ENCODE measurements at regions of chr5 and their contacts with region 1.

Region 1: DNA sequence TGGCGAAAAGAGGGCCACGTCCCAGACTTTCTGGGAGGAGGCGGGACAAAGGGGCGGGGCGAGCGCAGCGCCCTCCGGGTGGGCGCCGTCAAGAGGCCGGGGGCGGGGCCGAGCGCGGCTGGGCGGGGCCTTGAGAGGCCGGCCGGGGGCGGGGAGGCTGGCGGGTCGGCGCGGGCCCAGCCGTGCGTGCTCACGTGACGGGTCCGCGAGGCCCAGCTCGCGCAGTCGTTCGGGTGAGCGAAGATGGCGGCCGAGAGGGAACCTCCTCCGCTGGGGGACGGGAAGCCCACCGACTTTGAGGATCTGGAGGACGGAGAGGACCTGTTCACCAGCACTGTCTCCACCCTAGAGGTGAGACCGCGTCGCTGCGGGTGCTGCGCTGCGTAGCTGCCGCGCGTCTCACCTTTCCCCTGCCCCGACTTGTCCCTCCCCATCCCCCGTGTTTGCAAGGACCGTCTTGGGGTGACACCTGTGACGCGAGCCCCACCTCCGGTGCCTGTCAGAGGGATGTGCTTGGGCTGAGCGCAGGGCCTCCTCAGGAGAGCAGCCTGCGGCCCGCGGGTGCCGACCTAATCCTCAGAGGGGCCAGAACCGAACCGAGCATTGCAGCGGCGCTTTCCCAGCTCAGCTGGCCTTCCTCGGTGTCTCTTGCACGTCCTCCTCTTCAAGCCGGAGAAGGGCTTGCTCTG is at the start of gene SNX2:
- DNase-seq: peak; percentile 92
- H3K4me3 Mint-ChIP-seq: peak within 1 kb of the TSS; percentile 94
- H3K27ac Mint-ChIP-seq: peak within 1 kb of the TSS; percentile 95
- H3K4me1 Mint-ChIP-seq: peaks cover 30% of the 10 kb centered on the region
- H3K27me3 Mint-ChIP-seq: no peaks in the 10 kb centered on the region
- CTCF ChIP-seq: peak; percentile 32
- total RNA-seq, gene SNX2: 94.9 and 120 TPM in 2 replicates

Region 2: GRCh38 chr5:122639864-122640263 is 135.1 kb before region 1 on chr5:
- CTCF ChIA-PET with region 1: no interaction called
- POLR2A ChIA-PET with region 1: no interaction called
- intact Hi-C with region 1: no loop called
- DNase-seq: peak; percentile 42
- H3K4me3 Mint-ChIP-seq: no peak overlapping the region
- H3K27ac Mint-ChIP-seq: no peak overlapping the region
- H3K4me1 Mint-ChIP-seq: peaks cover 7% of the 10 kb centered on the region
- H3K27me3 Mint-ChIP-seq: no peaks in the 10 kb centered on the region
- CTCF ChIP-seq: no peak

Region 3: DNA sequence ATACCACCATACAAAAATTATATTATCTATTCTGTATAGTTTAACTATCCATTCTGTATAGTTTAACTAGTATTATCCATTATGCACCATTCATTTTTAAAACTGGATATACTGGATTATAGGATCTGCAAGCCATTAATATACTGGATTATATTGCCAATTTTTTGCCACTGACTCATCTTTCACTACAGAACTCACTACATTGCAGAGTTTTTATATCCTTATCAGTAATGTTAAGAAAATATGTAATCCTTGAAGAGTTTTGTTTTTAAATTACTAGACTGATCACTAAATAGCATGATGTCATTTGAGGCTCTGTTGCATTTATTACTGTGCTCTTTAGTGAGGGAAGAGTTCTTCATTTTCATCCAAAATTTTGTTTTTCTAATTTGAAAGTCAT is 110.0 kb before region 1 on chr5:
- CTCF ChIA-PET with region 1: no interaction called
- POLR2A ChIA-PET with region 1: no interaction called
- intact Hi-C with region 1: no loop called
- DNase-seq: no peak
- H3K4me3 Mint-ChIP-seq: no peak overlapping the region
- H3K27ac Mint-ChIP-seq: no peak overlapping the region
- H3K4me1 Mint-ChIP-seq: peaks cover 10% of the 10 kb centered on the region
- H3K27me3 Mint-ChIP-seq: no peaks in the 10 kb centered on the region
- CTCF ChIP-seq: no peak

Region 4: DNA sequence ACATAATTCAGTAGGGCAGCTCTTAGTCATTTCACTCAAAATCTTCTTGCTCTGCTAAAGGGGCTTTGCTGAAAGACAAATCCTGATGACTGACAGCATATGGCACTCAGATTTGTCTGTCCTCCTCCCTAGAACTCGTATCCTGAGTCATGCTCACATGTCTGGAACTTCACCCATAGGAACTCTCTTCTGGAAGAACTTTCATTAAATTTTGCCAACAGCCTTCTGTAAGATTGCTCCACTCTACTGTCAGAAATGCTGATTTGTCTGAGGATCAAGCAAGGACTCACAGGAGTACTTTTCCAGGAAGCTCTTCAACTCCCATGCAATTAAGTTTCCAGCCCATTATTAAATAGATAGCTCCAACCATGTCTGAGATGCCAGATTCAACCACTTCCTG is 59.9 kb before region 1 on chr5:
- CTCF ChIA-PET with region 1: no interaction called
- POLR2A ChIA-PET with region 1: interaction called, 4 read pairs
- intact Hi-C with region 1: loop called (anchors 5 kb)
- DNase-seq: peak; percentile 25
- H3K4me3 Mint-ChIP-seq: no peak overlapping the region
- H3K27ac Mint-ChIP-seq: peak overlapping the region; percentile 13
- H3K4me1 Mint-ChIP-seq: peaks cover 10% of the 10 kb centered on the region
- H3K27me3 Mint-ChIP-seq: no peaks in the 10 kb centered on the region
- CTCF ChIP-seq: no peak

Region 5: DNA sequence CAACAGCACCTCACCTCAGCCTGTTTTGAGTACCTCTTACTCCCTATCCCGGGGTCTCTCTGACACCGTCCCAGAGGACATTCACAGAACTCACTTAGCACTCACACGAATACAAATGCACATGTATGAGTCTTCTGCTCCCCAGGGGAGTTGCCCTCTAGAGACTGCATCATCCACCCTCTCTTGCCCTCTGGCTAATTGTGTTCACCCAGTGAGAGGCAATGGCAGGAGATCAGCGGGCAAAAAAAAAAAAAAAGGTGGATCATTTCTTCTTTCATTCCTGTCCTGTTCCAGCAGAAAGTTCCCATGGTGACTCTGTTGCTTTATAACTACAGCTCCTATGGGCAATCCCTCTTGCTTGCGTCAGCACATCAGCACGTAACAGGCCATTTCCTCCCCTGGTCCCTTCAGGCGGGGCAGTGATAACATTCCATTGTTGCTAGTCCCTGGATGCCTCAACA is 23.7 kb before region 1 on chr5:
- CTCF ChIA-PET with region 1: interaction called, 3 read pairs
- POLR2A ChIA-PET with region 1: interaction called, 18 read pairs
- intact Hi-C with region 1: no loop called
- DNase-seq: peak; percentile 87
- H3K4me3 Mint-ChIP-seq: peak overlapping the region; percentile 52
- H3K27ac Mint-ChIP-seq: peak overlapping the region; percentile 97
- H3K4me1 Mint-ChIP-seq: peaks cover 44% of the 10 kb centered on the region
- H3K27me3 Mint-ChIP-seq: no peaks in the 10 kb centered on the region
- CTCF ChIP-seq: no peak

Region 6: DNA sequence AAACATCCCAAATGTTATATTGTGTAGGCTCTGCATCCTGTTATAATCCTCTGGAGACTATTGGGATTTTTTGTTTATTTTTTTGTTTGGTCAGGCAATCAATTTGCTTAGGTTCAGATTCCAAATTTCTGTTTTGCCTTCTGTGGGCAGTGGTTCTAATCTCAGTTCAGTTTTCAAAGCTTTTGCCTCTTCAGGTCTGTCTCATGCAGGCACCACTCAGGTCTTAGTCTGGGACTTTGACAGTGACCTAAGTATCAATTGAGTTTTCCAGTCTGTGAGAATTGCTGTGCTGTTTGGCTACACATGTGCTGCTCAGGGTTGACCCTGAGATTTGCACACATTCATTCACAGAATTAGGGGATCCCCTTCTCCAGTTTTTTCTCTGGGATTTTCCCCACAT is 14.0 kb after region 1 on chr5:
- CTCF ChIA-PET with region 1: interaction called, 8 read pairs
- POLR2A ChIA-PET with region 1: interaction called, 34 read pairs
- intact Hi-C with region 1: no loop called
- DNase-seq: no peak
- H3K4me3 Mint-ChIP-seq: no peak overlapping the region
- H3K27ac Mint-ChIP-seq: no peak overlapping the region
- H3K4me1 Mint-ChIP-seq: peaks cover 4% of the 10 kb centered on the region
- H3K27me3 Mint-ChIP-seq: no peaks in the 10 kb centered on the region
- CTCF ChIP-seq: no peak

Region 7: GRCh38 chr5:122959740-122960445 is 184.9 kb after region 1 on chr5:
- CTCF ChIA-PET with region 1: no interaction called
- POLR2A ChIA-PET with region 1: no interaction called
- intact Hi-C with region 1: no loop called
- DNase-seq: no peak
- H3K4me3 Mint-ChIP-seq: no peak overlapping the region
- H3K27ac Mint-ChIP-seq: no peak overlapping the region
- H3K4me1 Mint-ChIP-seq: peaks cover 5% of the 10 kb centered on the region
- H3K27me3 Mint-ChIP-seq: no peaks in the 10 kb centered on the region
- CTCF ChIP-seq: no peak